ENCODE measurements at regions of chr5 and their contacts with region 1.

Region 1: DNA sequence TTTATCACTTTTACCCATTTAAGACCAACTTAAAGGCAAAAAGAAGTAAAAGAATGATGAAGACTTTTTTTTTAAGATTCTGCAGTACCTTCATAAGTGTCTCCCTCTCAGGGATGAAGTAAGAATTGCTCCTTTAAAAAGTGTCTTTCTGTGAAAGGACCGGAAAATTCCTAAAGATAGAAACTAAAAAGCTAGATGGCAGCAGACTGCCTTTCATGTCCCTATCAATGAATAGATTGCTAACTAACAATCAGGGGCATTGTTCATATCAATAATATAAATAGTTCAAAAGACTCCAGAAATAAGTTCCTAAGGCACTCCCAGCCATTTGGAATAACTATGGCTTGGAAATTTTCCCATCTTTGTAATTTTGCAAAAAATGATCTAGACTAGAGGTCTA is 558.0 kb downstream of the PDE4D start:
- H3K4me3 ChIP-seq: no peak overlapping the region
- H3K27ac ChIP-seq: no peak overlapping the region
- H3K4me1 ChIP-seq: peaks cover 5% of the 10 kb centered on the region; the same call in 1 of the 2 replicates
- CTCF ChIP-seq: 0 out of 2 replicates have a peak, but pooled peaks have one; percentile 26

Region 2: GRCh38 chr5:58378613-58379390 is 956.7 kb before region 1 on chr5:
- CTCF ChIA-PET with region 1: no interaction called
- POLR2A ChIA-PET with region 1: no interaction called
- H3K4me3 ChIP-seq: no peak overlapping the region
- H3K27ac ChIP-seq: no peak overlapping the region
- H3K4me1 ChIP-seq: no peaks in the 10 kb centered on the region
- CTCF ChIP-seq: no peak

Region 3: DNA sequence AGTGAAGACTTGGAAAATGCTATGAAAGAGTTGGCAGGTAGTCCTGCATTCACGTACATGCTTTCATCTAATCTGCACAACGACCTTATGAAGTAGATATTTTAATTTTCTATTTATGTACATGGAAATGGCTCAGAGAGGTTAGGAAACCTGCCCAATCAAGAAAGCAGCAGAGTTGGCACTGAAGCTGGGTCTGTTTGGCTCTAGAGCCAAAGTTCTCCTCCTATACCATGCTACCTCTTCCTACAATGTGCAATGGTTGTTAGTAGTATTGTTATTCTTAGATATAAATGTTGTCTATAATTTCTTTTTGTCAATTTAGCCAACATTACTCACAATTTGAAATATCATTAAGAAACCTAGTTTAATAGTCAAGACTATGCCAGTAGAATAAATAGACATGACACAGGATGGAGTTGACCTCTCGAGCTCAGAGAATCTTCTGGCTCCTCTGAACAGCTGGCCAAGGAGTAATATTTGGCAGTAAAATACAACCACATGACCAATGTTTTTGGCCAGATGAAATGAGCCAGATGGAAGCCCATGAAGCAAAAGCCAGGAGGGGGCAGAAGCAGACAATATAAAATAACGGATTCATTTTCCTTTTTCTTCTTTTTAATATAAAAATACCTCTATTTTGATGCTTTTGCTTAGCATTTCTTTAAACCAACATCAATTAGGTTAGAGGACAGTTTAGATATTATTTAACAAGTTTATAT is 15.7 kb after region 1 on chr5:
- CTCF ChIA-PET with region 1: interaction called, 23 read pairs
- POLR2A ChIA-PET with region 1: no interaction called
- H3K4me3 ChIP-seq: no peak overlapping the region
- H3K27ac ChIP-seq: no peak overlapping the region
- H3K4me1 ChIP-seq: peaks cover 29% of the 10 kb centered on the region
- CTCF ChIP-seq: no peak